Activated CD8-positive, alpha-beta memory T cell treated with anti-CD3 and anti-CD28 coated beads, Interleukin-2, amount 10 ng/mL, durations not matched to agents 7 days and 5 days (primary cell): ENCODE measurements at regions of chr10 and their contacts with region 1.

Region 1: DNA sequence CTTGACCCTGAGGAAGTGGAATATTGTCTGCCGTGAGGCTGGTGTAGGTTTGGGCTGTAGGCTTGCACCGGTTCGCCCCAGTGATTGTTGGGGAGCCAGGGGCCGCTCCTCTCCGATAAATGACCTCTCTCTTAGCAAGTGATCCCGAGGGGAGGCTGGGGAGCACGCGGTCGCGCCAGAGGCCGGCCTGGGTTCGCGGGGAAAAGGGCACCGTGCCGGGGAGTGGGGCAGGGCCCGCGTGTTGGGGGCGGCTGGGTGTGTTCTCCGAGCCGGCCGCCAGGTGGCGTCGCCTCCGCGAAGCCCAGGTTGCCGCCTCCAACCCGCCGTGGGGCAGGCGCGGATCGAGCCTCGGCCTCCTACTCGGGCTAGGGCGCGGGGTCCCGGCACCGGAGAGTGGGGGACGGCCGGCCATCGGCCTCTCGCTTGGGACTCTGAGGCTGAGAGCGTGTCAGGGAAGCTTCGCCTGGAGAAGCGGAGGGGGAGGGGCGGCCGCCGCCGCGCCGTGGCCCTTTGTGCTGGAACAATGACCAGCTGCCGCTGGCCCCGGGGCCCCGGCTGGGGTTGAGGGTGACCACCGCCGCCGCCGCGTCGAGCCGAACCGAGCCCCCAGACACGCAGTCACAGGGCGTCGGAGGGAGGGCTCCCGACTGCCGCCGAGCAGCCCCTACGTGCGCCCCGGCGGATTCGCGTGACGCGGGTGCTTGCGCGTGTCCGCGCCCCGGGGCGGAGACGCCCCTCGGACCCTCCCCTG is 442 bp upstream of the LZTS2 start:
- DNase-seq: peak; percentile 79
- ATAC-seq: peak; percentile 68
- H3K4me3 Mint-ChIP-seq: peak overlapping the region; percentile 76
- H3K27ac Mint-ChIP-seq: peak overlapping the region; percentile 80
- H3K4me1 Mint-ChIP-seq: peaks cover 22% of the 10 kb centered on the region
- H3K27me3 Mint-ChIP-seq: no peaks in the 10 kb centered on the region

Region 2: GRCh38 chr10:100551196-100551595 is 448.0 kb before region 1 on chr10:
- CTCF ChIA-PET with region 1: interaction called, 10 read pairs
- DNase-seq: no peak
- ATAC-seq: no peak
- H3K4me3 Mint-ChIP-seq: no peak overlapping the region
- H3K27ac Mint-ChIP-seq: no peak overlapping the region
- H3K4me1 Mint-ChIP-seq: peaks cover 3% of the 10 kb centered on the region
- H3K27me3 Mint-ChIP-seq: no peaks in the 10 kb centered on the region

Region 3: DNA sequence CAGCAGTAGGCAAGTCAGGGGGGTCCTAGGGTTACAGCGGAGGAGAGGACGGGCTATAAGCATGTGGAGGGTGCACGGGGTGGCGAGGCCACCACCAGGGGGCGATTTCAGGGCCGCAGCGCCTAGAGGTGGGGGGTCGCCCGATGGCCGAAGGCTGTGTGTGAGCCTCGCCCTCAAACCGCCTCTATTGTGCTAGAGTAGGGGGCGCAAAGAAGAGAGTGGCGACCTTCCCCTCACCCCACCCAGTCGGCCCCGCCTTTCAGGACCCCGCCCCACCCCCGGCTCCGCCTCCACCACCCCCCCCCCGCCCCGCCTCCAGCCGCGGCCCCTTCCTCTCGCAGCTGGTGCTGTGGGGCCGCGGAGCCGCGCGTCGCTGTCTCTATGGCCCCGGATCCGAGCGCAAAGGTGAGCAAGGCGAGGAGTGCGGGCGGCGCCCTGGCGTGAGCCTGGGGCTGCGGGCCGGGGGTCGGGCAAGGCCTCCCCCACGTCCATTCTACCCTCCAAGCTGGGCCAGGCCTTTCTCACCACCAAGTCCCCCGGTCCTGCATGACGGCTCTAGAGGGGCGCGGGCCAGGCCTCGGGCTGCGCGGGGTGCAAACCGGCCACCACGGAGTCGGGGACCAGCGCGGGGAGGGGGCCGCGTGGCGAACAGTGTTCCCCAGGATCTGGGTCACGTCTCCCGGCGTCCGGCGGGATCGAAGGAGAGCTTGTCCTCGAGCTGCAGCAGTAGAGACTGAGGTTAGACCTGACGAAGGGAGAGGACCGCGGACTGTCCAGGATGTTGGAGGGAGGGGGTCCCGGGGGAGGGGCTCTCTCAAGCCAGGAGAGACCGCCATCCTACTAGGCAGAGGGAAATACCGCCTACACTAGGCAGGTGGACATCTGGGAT is 29.7 kb before region 1 on chr10 and contains the start of gene SEMA4G:
- CTCF ChIA-PET with region 1: interaction called, 11 read pairs
- DNase-seq: no peak
- ATAC-seq: peak; percentile 80
- H3K4me3 Mint-ChIP-seq: peak within 1 kb of the TSS; percentile 27
- H3K27ac Mint-ChIP-seq: peak within 1 kb of the TSS; percentile 35
- H3K4me1 Mint-ChIP-seq: peaks cover 7% of the 10 kb centered on the region
- H3K27me3 Mint-ChIP-seq: no peaks in the 10 kb centered on the region
- total RNA-seq, gene SEMA4G: 0.26 to 0.45 TPM

Region 4: GRCh38 chr10:101012525-101013364 is 13.6 kb after region 1 on chr10:
- CTCF ChIA-PET with region 1: interaction called, 174 read pairs
- DNase-seq: peak; percentile 89
- ATAC-seq: peak; percentile 90
- H3K4me3 Mint-ChIP-seq: no peak overlapping the region
- H3K27ac Mint-ChIP-seq: peak overlapping the region; percentile 27
- H3K4me1 Mint-ChIP-seq: peaks cover 27% of the 10 kb centered on the region
- H3K27me3 Mint-ChIP-seq: peaks cover 17% of the 10 kb centered on the region

Region 5: DNA sequence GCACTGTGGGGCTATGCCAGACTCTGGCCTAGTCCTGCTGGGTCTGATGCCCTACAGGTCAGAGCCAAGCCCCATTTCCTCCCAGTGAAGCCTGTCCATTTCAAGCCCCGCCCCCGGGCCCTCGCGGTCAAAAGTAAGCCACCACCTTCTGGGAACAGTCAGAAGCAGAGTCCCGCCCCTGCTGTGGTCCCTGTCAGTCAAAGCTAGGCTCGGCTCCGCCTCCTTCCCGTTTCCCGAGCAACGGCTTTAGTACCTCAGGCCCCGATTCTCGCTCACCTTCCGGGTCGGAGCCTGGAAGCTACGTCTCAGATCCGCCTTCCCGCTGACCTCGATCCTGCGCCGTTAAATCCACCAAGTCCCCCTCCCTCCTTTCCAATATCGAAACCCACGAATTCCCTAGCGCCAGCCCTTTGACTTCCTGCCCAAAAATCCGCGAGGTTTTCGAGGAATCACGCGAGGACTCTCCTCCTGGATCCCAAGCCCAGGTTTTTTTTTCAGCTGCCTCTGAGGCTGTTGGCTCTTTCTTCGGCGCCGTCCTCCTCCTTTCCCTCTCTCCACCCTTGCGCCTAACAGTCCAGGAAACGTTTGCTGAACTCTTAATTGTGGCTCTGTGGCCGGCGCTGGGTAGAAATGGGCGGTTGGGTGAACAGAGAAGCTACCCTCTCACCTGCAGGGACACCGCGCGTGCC is 43.6 kb after region 1 on chr10:
- CTCF ChIA-PET with region 1: interaction called, 20 read pairs
- DNase-seq: peak; percentile 96
- ATAC-seq: peak; percentile 95
- H3K4me3 Mint-ChIP-seq: peak overlapping the region; percentile 95
- H3K27ac Mint-ChIP-seq: peak overlapping the region; percentile 91
- H3K4me1 Mint-ChIP-seq: peaks cover 23% of the 10 kb centered on the region
- H3K27me3 Mint-ChIP-seq: peaks cover 31% of the 10 kb centered on the region

Region 6: GRCh38 chr10:101091546-101092481 is 92.6 kb after region 1 on chr10:
- CTCF ChIA-PET with region 1: no interaction called
- DNase-seq: no peak
- ATAC-seq: no peak
- H3K4me3 Mint-ChIP-seq: no peak overlapping the region
- H3K27ac Mint-ChIP-seq: no peak overlapping the region
- H3K4me1 Mint-ChIP-seq: no peaks in the 10 kb centered on the region
- H3K27me3 Mint-ChIP-seq: peaks cover 55% of the 10 kb centered on the region